ENCODE measurements at regions of chr10 and their contacts with region 1.

Region 1: DNA sequence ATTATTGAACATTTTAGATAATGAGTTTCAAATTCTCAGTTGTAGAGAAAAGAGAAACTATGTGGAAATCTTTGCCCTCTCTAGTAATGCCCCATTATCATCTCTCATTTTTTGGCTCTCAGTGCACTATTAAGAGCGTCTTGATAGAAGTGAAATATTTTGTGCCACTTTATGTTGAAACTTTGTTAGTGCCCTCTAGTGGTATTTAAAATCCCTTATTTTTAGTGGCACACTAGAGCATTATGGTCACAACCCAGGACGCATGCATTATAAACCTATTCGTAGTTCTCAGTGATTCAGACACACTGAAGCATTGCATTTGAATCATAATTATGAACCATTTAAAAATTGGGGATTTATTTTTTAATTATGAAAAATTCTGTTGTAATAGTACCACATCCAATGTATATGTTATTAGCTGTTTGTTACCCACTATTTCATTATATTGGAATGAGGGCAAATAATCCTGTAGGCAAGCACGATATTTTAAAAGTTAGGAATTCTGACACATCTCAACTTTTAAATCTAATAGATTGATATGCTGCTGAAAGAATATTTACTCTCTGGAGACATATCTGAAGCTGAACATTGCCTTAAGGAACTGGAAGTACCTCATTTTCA is 21.9 kb downstream of the PDCD4 start:
- DNase-seq: peak in 4 of 5 donors; percentile 60 to 66 (median 64)
- H3K4me3 ChIP-seq: no peak overlapping the region
- H3K4me3 Mint-ChIP-seq: no peak overlapping the region
- H3K27ac ChIP-seq: peak overlapping the region; percentile 6
- H3K27ac Mint-ChIP-seq: peak overlapping the region in 4 of 7 donors; percentile 0 to 43 (median 36)
- H3K4me1 ChIP-seq: peaks cover 49% of the 10 kb centered on the region
- H3K4me1 Mint-ChIP-seq: peaks cover 28 to 64% (median 50%) of the 10 kb centered on the region in 4 donors
- H3K27me3 ChIP-seq: no peaks in the 10 kb centered on the region
- H3K27me3 Mint-ChIP-seq: no peaks in the 10 kb centered on the region

Region 2: GRCh38 chr10:110910138-110910537 is 16.5 kb after region 1 on chr10:
- CTCF ChIA-PET with region 1: interaction called, 4 read pairs
- POLR2A ChIA-PET with region 1: interaction called, 14 read pairs
- intact Hi-C with region 1: no loop called
- DNase-seq: no peak
- H3K4me3 ChIP-seq: no peak overlapping the region
- H3K4me3 Mint-ChIP-seq: no peak overlapping the region
- H3K27ac ChIP-seq: no peak overlapping the region
- H3K27ac Mint-ChIP-seq: peak overlapping the region in 4 of 7 donors; percentile 4 to 68 (median 48)
- H3K4me1 ChIP-seq: no peaks in the 10 kb centered on the region
- H3K4me1 Mint-ChIP-seq: peaks cover 18 to 28% (median 21%) of the 10 kb centered on the region in 4 donors
- H3K27me3 ChIP-seq: no peaks in the 10 kb centered on the region
- H3K27me3 Mint-ChIP-seq: no peaks in the 10 kb centered on the region

Region 3: GRCh38 chr10:111598436-111599059 is 704.9 kb after region 1 on chr10:
- CTCF ChIA-PET with region 1: no interaction called
- POLR2A ChIA-PET with region 1: no interaction called
- intact Hi-C with region 1: loop called (anchors 10 kb)
- DNase-seq: peak; percentile 31 to 51 (median 41)
- H3K4me3 ChIP-seq: no peak overlapping the region
- H3K4me3 Mint-ChIP-seq: no peak overlapping the region
- H3K27ac ChIP-seq: no peak overlapping the region
- H3K27ac Mint-ChIP-seq: no peak overlapping the region
- H3K4me1 ChIP-seq: no peaks in the 10 kb centered on the region
- H3K4me1 Mint-ChIP-seq: no peaks in the 10 kb centered on the region
- H3K27me3 ChIP-seq: no peaks in the 10 kb centered on the region
- H3K27me3 Mint-ChIP-seq: peaks cover 2 to 5% of the 10 kb centered on the region in 2 donors